ENCODE measurements at regions of chr11 and their contacts with region 1.

Region 1: DNA sequence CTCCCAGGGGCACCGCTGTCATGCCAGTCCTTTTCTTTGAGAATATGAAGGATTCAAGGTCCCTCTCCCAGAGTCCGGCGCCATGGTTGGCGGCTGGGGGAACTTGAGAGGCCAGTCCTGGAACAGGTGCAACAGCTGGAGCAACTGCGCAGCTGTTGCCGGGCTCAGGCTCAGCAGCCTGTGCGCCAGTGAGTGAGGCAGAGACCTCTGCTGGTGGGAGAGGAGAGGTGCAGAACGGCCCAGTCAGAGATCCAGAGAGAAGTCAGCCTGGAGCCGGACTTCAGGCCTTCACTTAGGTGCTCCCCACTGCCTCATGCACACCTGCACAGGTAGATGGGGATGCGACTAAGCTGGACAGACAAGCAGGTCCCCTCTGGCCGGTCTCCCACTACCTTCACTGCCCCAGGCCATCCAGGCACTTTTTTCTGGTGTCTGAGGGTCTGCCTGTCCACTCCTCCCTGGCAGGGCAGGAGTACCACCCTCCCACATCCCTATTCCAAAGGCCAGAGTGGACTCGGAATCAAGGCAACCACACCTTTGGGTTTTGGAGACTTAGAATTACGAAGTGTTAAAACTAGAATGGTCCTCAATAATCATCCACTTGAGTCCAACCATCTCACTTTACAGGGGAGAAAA is 4.6 kb downstream of the CHRDL2 start:
- DNase-seq: peak; percentile 76 to 91 (median 89)
- ATAC-seq: peak; percentile 88
- H3K4me3 ChIP-seq: no peak overlapping the region
- H3K27ac ChIP-seq: no peak overlapping the region
- H3K4me1 ChIP-seq: no peaks in the 10 kb centered on the region
- H3K27me3 ChIP-seq: no peaks in the 10 kb centered on the region

Region 2: GRCh38 chr11:74634537-74634936 is 92.1 kb before region 1 on chr11:
- intact Hi-C with region 1: loop called (anchors 5 to 10 kb)
- DNase-seq: no peak
- ATAC-seq: peak in 1 of 2 donors; percentile 63
- H3K4me3 ChIP-seq: no peak overlapping the region
- H3K27ac ChIP-seq: no peak overlapping the region
- H3K4me1 ChIP-seq: no peaks in the 10 kb centered on the region
- H3K27me3 ChIP-seq: no peaks in the 10 kb centered on the region

Region 3: GRCh38 chr11:74702383-74703007 is 24.2 kb before region 1 on chr11:
- intact Hi-C with region 1: loop called in 1 of 4 experiments (anchors 2 kb)
- DNase-seq: peak; percentile 64 to 83 (median 76)
- ATAC-seq: peak; percentile 55 to 56
- H3K4me3 ChIP-seq: no peak overlapping the region
- H3K27ac ChIP-seq: no peak overlapping the region
- H3K4me1 ChIP-seq: no peaks in the 10 kb centered on the region
- H3K27me3 ChIP-seq: no peaks in the 10 kb centered on the region

Region 4: DNA sequence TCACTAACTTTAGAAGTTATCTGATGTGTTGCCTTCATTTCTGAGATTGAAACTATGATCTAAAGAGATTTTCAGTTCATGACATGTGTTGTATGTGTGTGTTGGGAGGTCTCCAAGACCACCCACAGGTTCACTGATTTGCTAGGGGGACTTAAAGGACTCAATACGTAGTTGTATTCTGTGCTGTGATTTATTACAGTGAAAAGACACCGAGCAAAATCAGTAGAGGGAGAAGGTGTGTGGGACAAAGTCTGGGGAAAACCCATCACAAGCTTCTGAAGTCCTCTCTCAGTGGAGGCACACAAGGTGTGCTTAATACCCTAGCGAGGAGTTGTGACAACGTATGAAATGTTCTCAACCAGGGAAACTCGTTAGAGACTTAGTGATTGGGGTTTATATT is 57.6 kb after region 1 on chr11:
- intact Hi-C with region 1: no loop called
- DNase-seq: no peak
- ATAC-seq: no peak
- H3K4me3 ChIP-seq: no peak overlapping the region
- H3K27ac ChIP-seq: no peak overlapping the region
- H3K4me1 ChIP-seq: peaks cover 13% of the 10 kb centered on the region
- H3K27me3 ChIP-seq: no peaks in the 10 kb centered on the region

Measured in right cardiac atrium (tissue), 5 donors.